ENCODE measurements at regions of chr10 and their contacts with region 1.

Region 1: DNA sequence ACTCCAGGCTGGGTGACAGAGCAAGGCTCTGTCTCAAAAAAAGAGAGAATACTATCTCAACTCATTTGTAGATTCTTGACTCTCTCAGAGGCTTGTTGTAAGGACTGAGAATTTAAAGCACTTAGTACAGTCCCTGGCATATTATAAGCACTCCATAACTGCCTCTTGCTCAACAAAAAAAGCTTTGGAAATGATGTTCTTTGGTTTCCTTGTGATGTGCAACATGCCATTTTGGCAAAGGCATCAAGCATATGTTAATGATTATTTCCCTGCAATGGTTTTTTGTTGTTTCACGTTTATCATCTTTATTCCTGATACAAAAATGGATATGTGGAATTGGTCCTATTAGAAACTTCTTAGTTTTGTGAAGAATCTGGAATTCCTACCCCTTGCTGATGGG is 15.7 kb downstream of the NOLC1 start:
- DNase-seq: no peak
- ATAC-seq: no peak
- H3K4me3 Mint-ChIP-seq: no peak overlapping the region
- H3K27ac Mint-ChIP-seq: no peak overlapping the region
- H3K4me1 Mint-ChIP-seq: peaks cover 4% of the 10 kb centered on the region
- H3K27me3 Mint-ChIP-seq: no peaks in the 10 kb centered on the region

Region 2: DNA sequence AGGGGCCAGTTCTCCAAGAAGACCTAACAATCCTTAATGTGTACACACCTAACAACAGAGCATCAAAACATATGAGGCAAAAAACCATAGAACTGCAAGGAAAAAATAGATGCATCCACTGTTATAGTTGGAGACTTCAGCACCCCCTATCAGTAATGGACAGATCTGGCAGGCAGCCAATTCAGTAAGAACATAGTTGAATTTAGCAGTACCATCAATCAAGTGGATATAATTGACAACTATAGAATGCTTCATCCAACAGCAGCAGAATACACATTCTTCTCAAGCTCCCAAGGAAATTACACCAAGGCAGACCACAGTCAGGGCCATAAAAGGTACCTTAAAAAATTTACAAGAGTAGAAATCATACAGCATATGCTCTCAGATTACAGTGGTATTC is 622.0 kb before region 1 on chr10:
- CTCF ChIA-PET with region 1: no interaction called
- POLR2A ChIA-PET with region 1: no interaction called
- intact Hi-C with region 1: no loop called
- DNase-seq: no peak
- ATAC-seq: no peak
- H3K4me3 Mint-ChIP-seq: no peak overlapping the region
- H3K27ac Mint-ChIP-seq: no peak overlapping the region
- H3K4me1 Mint-ChIP-seq: peaks cover 5% of the 10 kb centered on the region
- H3K27me3 Mint-ChIP-seq: no peaks in the 10 kb centered on the region

Region 3: DNA sequence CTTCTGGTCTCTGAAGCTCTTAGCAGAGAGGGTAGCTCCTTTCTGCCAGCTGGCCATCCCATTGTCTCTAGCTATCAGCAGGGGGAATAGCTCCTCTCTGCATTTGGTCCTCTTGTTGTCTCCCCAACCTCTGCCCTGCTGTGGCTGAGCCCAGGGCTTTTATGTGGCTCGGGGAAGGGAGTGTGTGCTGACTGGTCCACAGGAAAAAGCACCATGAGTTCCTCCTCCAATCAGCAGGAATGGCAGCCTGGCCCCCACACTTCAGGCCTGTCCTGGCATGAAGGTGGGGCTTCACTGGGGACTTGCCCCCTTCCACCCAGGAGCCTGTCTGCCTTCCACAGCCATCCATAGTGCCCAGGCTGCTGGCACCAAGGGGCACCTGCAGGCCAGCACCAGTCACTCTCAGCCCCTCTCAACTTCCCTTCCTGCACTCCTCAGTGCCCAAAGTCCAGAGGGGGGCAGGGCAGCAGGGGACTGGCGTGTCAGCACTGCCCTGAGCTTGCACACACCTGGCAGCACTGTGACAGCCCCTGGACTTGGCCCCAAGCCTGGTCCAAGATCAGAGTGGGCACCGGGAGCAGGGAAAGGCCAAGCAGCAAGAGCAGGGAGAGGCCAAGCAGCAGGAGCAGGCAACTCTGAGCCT is 20.6 kb after region 1 on chr10:
- CTCF ChIA-PET with region 1: interaction called, 15 read pairs
- POLR2A ChIA-PET with region 1: interaction called, 5 read pairs
- intact Hi-C with region 1: no loop called
- DNase-seq: no peak
- ATAC-seq: no peak
- H3K4me3 Mint-ChIP-seq: no peak overlapping the region
- H3K27ac Mint-ChIP-seq: no peak overlapping the region
- H3K4me1 Mint-ChIP-seq: peaks cover 14% of the 10 kb centered on the region
- H3K27me3 Mint-ChIP-seq: no peaks in the 10 kb centered on the region